Naive thymus-derived CD4-positive, alpha-beta T cell (primary cell): ENCODE measurements at regions of chr18 and their contacts with region 1.

Region 1: DNA sequence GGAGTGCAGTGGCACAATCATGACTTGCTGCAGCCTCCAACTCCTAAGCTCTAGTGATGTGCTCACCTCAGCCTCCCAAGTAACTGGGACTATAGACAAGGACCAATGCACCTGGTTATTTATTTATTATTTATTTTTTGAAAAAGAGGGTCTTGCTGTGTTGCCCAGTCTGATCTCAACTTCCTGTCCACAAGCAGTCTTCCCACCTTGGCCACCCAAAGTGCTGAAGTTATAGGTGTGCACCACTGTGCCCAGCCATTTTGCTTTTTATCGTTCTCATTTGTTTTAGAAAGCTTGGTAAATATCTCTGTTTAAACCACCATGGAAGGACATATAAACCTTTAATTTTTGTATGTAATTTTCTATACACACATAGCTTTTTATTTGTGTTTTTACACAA is 74.2 kb downstream of the SMCHD1 start:
- DNase-seq: no peak
- ATAC-seq: no peak
- H3K4me3 ChIP-seq: no peak overlapping the region
- H3K4me3 Mint-ChIP-seq: no peak overlapping the region
- H3K27ac ChIP-seq: no peak overlapping the region
- H3K27ac Mint-ChIP-seq: peak overlapping the region in 2 of 9 donors; percentile 19 to 82
- H3K4me1 ChIP-seq: no peaks in the 10 kb centered on the region
- H3K4me1 Mint-ChIP-seq: peaks cover 0 to 26% (median 16%) of the 10 kb centered on the region in 7 donors
- H3K27me3 ChIP-seq: no peaks in the 10 kb centered on the region
- H3K27me3 Mint-ChIP-seq: no peaks in the 10 kb centered on the region

Region 2: GRCh38 chr18:2692508-2692907 is 37.2 kb before region 1 on chr18:
- CTCF ChIA-PET with region 1: no interaction called
- POLR2A ChIA-PET with region 1: no interaction called
- intact Hi-C with region 1: loop called (anchors 5 kb)
- DNase-seq: no peak
- ATAC-seq: no peak
- H3K4me3 ChIP-seq: no peak overlapping the region
- H3K4me3 Mint-ChIP-seq: peak overlapping the region in 1 of 10 donors; percentile 16
- H3K27ac ChIP-seq: no peak overlapping the region
- H3K27ac Mint-ChIP-seq: peak overlapping the region in 6 of 9 donors; percentile 5 to 76 (median 23)
- H3K4me1 ChIP-seq: peaks cover 3 to 12% of the 10 kb centered on the region in 2 donors
- H3K4me1 Mint-ChIP-seq: peaks cover 16 to 58% (median 48%) of the 10 kb centered on the region in 7 donors
- H3K27me3 ChIP-seq: no peaks in the 10 kb centered on the region
- H3K27me3 Mint-ChIP-seq: no peaks in the 10 kb centered on the region

Region 3: DNA sequence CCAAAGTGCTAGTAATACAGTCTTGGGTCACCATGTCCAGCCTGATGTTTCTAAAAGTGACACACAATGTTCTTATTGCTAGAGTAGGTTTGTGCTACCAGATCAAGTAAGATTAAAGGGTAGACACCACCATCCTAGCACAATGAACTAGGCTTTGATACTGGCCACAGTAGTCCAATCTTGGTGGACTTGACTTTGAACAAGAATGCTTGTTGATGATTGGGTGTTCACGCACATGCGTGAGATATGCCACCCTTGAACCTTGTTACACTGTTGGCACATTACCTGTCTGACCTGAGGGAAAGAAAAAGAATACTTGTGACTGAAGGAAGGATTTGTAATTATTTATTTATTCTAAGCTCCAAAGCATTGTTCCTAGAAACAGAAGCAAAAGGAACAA is 44.9 kb after region 1 on chr18:
- CTCF ChIA-PET with region 1: no interaction called
- POLR2A ChIA-PET with region 1: interaction called, 3 read pairs
- intact Hi-C with region 1: loop called in 1 of 2 experiments (anchors 5 kb)
- DNase-seq: no peak
- ATAC-seq: no peak
- H3K4me3 ChIP-seq: no peak overlapping the region
- H3K4me3 Mint-ChIP-seq: no peak overlapping the region
- H3K27ac ChIP-seq: no peak overlapping the region
- H3K27ac Mint-ChIP-seq: peak overlapping the region in 3 of 9 donors; percentile 5 to 78 (median 69)
- H3K4me1 ChIP-seq: no peaks in the 10 kb centered on the region
- H3K4me1 Mint-ChIP-seq: peaks cover 0 to 15% (median 3%) of the 10 kb centered on the region in 7 donors
- H3K27me3 ChIP-seq: no peaks in the 10 kb centered on the region
- H3K27me3 Mint-ChIP-seq: no peaks in the 10 kb centered on the region